ENCODE measurements at regions of chr7 and their contacts with region 1.

Region 1: GRCh38 chr7:37181550-37181932 is 267.1 kb downstream of the ELMO1 start:
- DNase-seq: no peak
- ATAC-seq: no peak
- H3K4me3 ChIP-seq: no peak overlapping the region
- H3K27ac ChIP-seq: no peak overlapping the region
- H3K4me1 ChIP-seq: no peaks in the 10 kb centered on the region
- H3K27me3 ChIP-seq: no peaks in the 10 kb centered on the region

Region 2: GRCh38 chr7:36967387-36967786 is 214.2 kb before region 1 on chr7:
- intact Hi-C with region 1: loop called (anchors 1 kb)
- DNase-seq: peak in 1 of 2 donors; percentile 67
- ATAC-seq: peak; percentile 90
- H3K4me3 ChIP-seq: no peak overlapping the region
- H3K27ac ChIP-seq: no peak overlapping the region
- H3K4me1 ChIP-seq: no peaks in the 10 kb centered on the region
- H3K27me3 ChIP-seq: no peaks in the 10 kb centered on the region

Region 3: DNA sequence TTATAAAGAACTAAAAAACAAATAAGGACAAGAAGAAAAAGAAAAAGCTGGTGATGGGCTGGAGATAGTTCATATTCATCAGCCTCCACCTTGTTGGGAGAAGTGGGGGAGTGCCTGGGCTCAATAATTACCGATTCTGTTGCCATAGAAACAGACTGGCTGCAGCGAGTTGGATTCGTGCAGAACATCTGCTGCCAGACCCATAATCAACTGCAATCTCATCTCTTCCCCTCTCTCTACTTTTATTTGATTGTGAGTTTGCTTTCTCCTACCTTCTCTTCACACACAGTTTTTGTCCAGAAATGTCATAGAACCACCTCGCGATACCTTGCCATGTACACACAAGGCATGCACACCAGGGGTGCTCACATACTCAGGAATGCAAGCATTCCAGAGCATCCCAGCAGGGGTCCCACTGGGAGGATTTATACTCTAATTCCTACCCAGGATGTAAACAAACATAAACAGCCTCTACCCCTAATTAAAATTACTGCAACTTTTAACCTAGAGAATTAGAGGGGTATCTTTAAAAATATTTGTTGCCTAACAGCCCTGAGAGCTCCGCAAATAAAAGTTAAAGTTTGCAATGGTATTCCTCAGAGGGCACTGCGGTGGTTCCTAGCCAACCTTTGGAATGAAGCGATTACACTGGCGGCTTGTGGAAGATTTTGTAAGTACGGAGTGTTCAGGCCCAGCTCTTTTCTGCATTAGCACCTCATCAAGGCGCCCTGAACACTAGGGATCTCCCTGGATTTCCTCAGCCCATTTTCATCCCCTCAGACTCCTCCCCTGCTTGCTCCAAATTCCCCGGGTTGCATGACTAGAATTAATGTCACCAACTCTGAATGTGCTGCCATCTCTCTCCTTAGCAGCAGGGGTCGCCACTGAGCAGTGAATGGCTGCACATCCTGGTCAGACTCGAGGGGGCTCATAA is 194.8 kb before region 1 on chr7:
- intact Hi-C with region 1: loop called (anchors 1 to 2 kb)
- DNase-seq: peak; percentile 63 to 88
- ATAC-seq: peak; percentile 82
- H3K4me3 ChIP-seq: no peak overlapping the region
- H3K27ac ChIP-seq: no peak overlapping the region
- H3K4me1 ChIP-seq: no peaks in the 10 kb centered on the region
- H3K27me3 ChIP-seq: peaks cover 0 to 2% of the 10 kb centered on the region in 2 donors